Activated CD4-positive, alpha-beta T cell treated with anti-CD3 and anti-CD28 coated beads for 36 hours (primary cell): ENCODE measurements at regions of chr2 and their contacts with region 1.

Region 1: DNA sequence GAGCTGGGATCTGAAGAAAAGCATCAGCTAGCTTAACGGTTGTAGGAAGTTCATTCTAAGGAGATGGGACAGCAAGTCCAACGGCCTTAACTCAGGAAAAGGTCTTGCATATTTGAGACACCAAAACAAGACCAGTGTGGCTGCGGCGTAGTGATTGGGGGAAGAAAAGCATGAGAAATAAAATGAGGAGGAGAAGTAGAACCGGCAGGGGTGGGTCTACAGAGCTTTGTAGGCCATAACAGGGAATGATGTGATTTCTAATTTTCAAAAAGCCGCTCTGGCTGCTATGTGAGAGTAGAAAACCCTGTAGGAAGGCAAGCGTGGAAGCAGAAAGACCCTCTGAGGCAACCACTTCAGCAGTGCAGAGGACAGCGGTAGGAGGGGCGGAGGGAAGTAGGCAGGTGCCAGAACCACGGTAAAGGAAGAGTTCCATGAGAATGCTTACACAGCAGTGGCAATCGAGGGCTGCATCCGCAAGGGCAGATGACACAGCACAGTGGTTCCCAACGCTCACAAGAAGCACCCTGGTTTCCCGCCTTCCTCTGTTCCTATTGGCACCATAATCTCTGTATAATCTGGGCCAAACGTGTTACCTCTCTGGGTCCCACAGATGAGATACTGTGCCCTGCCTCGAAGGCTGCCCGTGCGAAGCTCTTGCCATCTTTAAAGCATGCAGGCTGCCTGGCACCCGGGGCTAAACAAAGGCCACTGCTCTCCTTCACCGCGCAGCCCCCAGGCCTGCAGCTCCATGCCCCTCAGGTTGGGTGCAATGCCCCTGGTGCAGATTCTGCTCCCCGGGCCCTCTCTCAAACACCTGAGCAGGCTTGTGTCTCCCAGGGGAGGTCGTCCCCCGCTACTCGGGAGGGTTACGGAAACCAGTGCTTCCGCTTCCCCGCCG is 791 bp downstream of the ANKRD39 start:
- DNase-seq: peak; percentile 66
- ATAC-seq: no peak
- H3K4me3 Mint-ChIP-seq: peak overlapping the region; percentile 90
- H3K27ac Mint-ChIP-seq: peak overlapping the region; percentile 79
- H3K4me1 Mint-ChIP-seq: peaks cover 36% of the 10 kb centered on the region
- H3K27me3 Mint-ChIP-seq: no peaks in the 10 kb centered on the region

Region 2: GRCh38 chr2:96638144-96639121 is 218.6 kb before region 1 on chr2 and contains the start of gene KANSL3:
- CTCF ChIA-PET with region 1: no interaction called
- POLR2A ChIA-PET with region 1: no interaction called
- intact Hi-C with region 1: loop called (anchors 1 to 5 kb)
- DNase-seq: peak; percentile 94
- ATAC-seq: peak; percentile 86
- H3K4me3 Mint-ChIP-seq: peak within 1 kb of the TSS; percentile 91
- H3K27ac Mint-ChIP-seq: peak within 1 kb of the TSS; percentile 93
- H3K4me1 Mint-ChIP-seq: peaks cover 30% of the 10 kb centered on the region
- H3K27me3 Mint-ChIP-seq: no peaks in the 10 kb centered on the region
- total RNA-seq, gene KANSL3: 33.9 to 39.1 TPM

Region 3: GRCh38 chr2:96739633-96740428 is 117.2 kb before region 1 on chr2 and contains the start of gene LMAN2L:
- CTCF ChIA-PET with region 1: no interaction called
- POLR2A ChIA-PET with region 1: no interaction called
- intact Hi-C with region 1: loop called in 1 of 2 experiments (anchors 1 kb)
- DNase-seq: peak; percentile 98
- ATAC-seq: peak; percentile 100
- H3K4me3 Mint-ChIP-seq: peak within 1 kb of the TSS; percentile 98
- H3K27ac Mint-ChIP-seq: peak within 1 kb of the TSS; percentile 84
- H3K4me1 Mint-ChIP-seq: peaks cover 40% of the 10 kb centered on the region
- H3K27me3 Mint-ChIP-seq: no peaks in the 10 kb centered on the region
- total RNA-seq, gene LMAN2L: 4.8 to 5.7 TPM

Region 4: DNA sequence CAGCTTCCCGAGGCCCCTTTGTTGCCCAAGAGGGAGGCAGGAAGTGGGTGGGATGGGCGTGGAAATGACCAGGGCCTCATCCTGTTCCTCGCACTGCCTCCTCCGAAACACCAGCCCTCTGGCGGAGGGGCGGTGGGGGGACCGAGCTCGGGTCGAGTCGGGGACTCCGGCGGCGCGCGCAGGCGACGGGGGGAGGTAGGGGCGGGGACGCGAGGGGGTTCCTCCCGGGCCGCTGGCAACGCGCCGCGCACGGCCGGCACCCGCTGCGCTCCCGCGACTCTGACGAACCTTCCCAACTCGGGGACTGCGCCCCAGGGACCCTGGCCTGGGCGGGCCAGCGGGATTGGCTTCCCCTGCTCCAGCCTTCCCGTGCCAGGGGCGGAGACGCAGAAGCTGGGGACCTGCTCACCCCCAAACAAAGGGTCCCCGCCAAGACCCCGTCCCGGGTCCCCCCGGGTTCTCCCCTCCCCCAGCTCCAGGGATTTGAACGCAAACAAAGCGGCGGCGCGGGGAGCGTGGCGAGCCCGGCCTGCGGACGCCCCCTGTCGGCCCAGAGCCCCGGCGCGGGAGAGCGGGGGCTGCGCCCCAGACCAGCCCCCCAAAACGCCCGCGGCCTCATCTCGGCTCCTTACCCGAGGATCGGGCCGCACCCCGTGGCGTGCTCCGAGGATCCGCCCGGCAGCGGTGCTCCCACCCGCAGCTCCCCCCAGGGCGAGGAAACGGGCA is 11.7 kb after region 1 on chr2:
- CTCF ChIA-PET with region 1: interaction called, 17 read pairs
- POLR2A ChIA-PET with region 1: interaction called, 7 read pairs
- intact Hi-C with region 1: loop called (anchors 1 kb)
- DNase-seq: peak; percentile 77
- ATAC-seq: peak; percentile 52
- H3K4me3 Mint-ChIP-seq: peak overlapping the region; percentile 78
- H3K27ac Mint-ChIP-seq: peak overlapping the region; percentile 83
- H3K4me1 Mint-ChIP-seq: peaks cover 41% of the 10 kb centered on the region
- H3K27me3 Mint-ChIP-seq: peaks cover 6% of the 10 kb centered on the region

Region 5: GRCh38 chr2:96913398-96914202 is 56.6 kb after region 1 on chr2:
- CTCF ChIA-PET with region 1: interaction called, 3 read pairs
- POLR2A ChIA-PET with region 1: interaction called, 4 read pairs
- intact Hi-C with region 1: loop called in 1 of 2 experiments (anchors 5 kb)
- DNase-seq: peak; percentile 72
- ATAC-seq: peak; percentile 96
- H3K4me3 Mint-ChIP-seq: peak overlapping the region; percentile 31
- H3K27ac Mint-ChIP-seq: peak overlapping the region; percentile 84
- H3K4me1 Mint-ChIP-seq: peaks cover 54% of the 10 kb centered on the region
- H3K27me3 Mint-ChIP-seq: no peaks in the 10 kb centered on the region

Region 6: GRCh38 chr2:96951093-96951654 is 94.1 kb after region 1 on chr2:
- CTCF ChIA-PET with region 1: interaction called, 36 read pairs
- POLR2A ChIA-PET with region 1: no interaction called
- intact Hi-C with region 1: loop called (anchors 1 kb)
- DNase-seq: peak; percentile 87
- ATAC-seq: peak; percentile 95
- H3K4me3 Mint-ChIP-seq: no peak overlapping the region
- H3K27ac Mint-ChIP-seq: no peak overlapping the region
- H3K4me1 Mint-ChIP-seq: peaks cover 23% of the 10 kb centered on the region
- H3K27me3 Mint-ChIP-seq: no peaks in the 10 kb centered on the region

Region 7: GRCh38 chr2:96960153-96960961 is 103.3 kb after region 1 on chr2:
- CTCF ChIA-PET with region 1: interaction called, 38 read pairs
- POLR2A ChIA-PET with region 1: no interaction called
- intact Hi-C with region 1: loop called (anchors 1 kb)
- DNase-seq: peak; percentile 93
- ATAC-seq: peak; percentile 78
- H3K4me3 Mint-ChIP-seq: no peak overlapping the region
- H3K27ac Mint-ChIP-seq: no peak overlapping the region
- H3K4me1 Mint-ChIP-seq: peaks cover 50% of the 10 kb centered on the region
- H3K27me3 Mint-ChIP-seq: no peaks in the 10 kb centered on the region